ENCODE measurements at regions of chr10 and their contacts with region 1.

Region 1: DNA sequence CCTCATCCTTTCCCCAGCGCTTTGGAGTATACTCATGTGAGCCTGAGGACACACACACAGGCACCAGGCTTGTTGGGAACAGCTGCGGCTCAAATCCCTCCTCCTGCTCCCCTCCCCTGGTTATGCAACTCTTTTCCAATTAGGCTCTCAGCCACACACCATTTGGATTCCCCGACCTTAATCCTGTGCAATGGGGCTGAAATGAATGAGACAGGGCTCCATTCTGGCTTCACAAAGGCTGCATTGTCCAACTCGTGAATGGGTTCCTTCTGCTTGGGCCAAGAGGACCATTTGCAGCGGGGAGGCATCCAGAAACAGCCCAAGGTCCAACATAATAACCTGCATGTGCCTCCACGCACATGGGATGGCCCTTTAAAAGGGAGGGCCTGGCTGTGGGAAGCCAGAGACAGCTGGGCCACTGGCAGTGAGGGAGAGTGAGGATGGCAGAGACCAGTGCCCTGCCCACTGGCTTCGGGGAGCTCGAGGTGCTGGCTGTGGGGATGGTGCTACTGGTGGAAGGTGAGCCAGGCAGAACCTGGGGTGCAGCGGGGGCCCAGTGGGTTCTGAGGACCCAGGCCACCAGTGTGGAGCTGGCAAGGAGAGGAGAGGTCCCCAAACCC is at the start of gene RGR:
- DNase-seq: no peak
- ATAC-seq: no peak
- H3K4me3 ChIP-seq: no peak within 1 kb of the TSS
- H3K27ac ChIP-seq: no peak within 1 kb of the TSS
- H3K4me1 ChIP-seq: peaks cover 0 to 5% of the 10 kb centered on the region in 2 experiments; a peak in 1 of 5 replicates
- H3K27me3 ChIP-seq: peaks cover 19 to 71% of the 10 kb centered on the region in 2 experiments; a peak in 4 of 5 replicates
- CTCF ChIP-seq: no peak
- EP300 ChIP-seq: no peak
- POLR2A ChIP-seq: no peak
- RAD21 ChIP-seq: no peak
- polyA plus RNA-seq, gene RGR: not detected

Region 2: DNA sequence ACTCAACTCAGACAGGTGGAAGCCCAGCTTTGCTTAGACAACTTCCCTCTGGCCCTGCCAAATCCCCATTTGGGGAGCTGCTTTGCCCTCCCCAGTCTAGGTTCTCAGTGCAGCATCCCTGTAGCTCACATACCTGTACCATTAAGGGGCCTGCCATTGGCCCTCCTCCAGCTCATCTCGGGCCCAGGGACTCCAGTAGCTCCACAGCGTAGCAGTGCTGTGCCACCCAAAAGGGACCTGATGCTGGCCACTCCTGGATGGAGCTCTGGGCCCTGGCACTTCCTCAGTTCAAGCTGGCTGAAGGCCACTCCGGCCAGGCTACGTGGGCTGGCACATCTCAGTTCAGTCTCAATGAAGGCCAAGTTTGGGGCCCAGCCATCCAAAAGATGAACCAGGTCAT is 10.8 kb before region 1 on chr10:
- CTCF ChIA-PET with region 1: no interaction called
- POLR2A ChIA-PET with region 1: interaction called, 13 read pairs
- in situ Hi-C with region 1: no loop called
- intact Hi-C with region 1: no loop called
- DNase-seq: no peak
- ATAC-seq: no peak
- H3K4me3 ChIP-seq: no peak overlapping the region
- H3K27ac ChIP-seq: no peak overlapping the region
- H3K4me1 ChIP-seq: peaks cover 0 to 7% of the 10 kb centered on the region in 2 experiments; a peak in 2 of 5 replicates
- H3K27me3 ChIP-seq: peaks cover 19 to 52% of the 10 kb centered on the region in 2 experiments; a peak in 4 of 5 replicates
- CTCF ChIP-seq: no peak
- EP300 ChIP-seq: no peak
- POLR2A ChIP-seq: no peak
- RAD21 ChIP-seq: no peak